ENCODE measurements at regions of chr4 and their contacts with region 1.

Region 1: DNA sequence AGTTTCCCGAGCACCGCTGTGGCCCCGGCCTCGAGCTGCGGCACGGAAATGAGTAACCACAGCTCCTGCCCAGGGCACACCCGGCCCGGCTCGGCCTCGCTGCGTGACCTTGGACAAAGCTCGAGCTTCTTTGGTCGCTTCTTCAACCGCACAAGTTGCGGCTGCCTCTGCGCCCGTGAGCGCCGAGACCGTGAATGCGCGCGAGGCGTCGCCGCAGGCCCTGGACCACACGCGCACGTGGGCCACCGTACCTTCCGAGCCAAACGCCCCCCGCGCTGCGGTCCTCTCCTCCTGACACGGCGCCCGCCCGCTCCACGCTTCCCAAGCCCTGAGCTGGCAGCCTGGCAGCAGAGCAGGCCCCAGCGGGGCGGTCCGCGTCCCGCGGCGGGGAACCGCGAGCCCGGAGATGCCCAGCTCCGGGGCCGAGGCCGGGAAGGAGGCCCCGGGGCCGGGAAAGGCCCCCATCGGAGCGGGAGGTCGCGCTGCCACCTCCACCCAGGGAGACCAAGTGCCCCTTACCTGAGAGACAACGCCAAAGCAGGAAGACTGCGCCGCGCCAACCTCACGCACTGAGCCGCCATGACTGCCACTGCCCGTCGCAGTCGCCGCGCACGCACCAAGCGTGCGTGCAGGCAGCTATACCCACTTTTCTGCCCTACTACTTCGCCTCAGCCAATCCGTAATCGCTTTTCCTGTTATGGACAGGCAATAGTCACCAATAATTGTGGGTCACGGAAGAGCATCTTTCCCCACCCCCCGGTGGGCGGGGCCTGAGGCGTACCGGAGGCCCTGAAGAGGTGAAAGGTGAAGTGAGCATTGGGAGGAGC is at the start of gene GRPEL1:
- DNase-seq: peak; percentile 99 to 100 (median 100)
- H3K4me3 ChIP-seq: peak within 1 kb of the TSS; percentile 36 to 88 (median 71)
- H3K27ac ChIP-seq: peak within 1 kb of the TSS; percentile 93 to 98 (median 95)
- H3K4me1 ChIP-seq: peaks cover 26 to 39% of the 10 kb centered on the region in 2 donors
- H3K27me3 ChIP-seq: no peaks in the 10 kb centered on the region
- CTCF ChIP-seq: peak in 1 of 6 experiments; percentile 17
- POLR2A ChIP-seq: peak; percentile 99
- total RNA-seq, gene GRPEL1: 43.7 to 249 (median 83.1) TPM

Region 2: DNA sequence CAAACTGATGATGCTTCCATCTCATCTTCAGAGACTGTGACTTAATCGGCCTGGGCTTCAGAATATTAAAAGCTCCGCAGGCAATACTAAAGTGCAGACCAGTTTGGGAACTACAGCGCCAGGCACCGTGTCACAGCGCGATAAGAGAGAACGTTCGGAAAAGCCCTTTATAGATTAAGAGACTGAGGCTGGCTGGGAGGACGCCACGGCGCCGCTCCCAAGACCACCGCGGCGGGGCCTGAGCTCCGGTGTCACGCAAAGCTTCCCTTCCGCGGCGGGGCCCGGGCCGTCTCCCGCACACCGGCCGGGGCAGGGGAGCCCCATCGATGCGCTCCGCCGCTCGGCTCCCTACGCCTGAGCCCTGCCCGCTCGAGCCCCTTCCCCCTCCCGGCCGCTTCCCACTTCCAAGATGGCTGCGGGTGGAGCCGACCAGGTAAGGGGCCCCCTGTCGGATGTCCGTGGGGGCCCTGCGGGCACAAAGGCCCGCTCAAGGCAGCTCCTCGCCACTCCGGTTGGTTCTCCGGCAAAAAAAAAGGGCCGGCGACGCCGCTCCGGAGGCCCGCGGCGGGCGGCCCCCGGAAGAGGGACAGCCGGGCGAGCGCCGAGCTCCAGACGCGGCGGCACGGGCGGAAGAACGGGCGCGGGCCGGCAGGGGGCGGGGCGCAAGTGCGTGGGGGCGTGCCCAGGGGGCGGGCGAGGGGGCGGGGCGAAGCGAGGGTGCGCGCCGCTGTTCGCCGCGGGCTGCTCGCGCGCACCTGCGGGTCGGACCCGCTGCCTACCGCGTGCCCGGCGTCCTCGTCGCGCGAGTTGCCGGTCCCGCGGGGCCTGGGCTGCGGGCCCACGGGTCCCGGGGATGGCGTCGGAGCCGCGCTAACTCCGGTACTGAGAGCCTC is 158.3 kb before region 1 on chr4 and contains the start of gene TBC1D14:
- intact Hi-C with region 1: loop called (anchors 10 kb)
- DNase-seq: peak; percentile 86 to 92 (median 90)
- H3K4me3 ChIP-seq: peak within 1 kb of the TSS; percentile 63 to 93 (median 78)
- H3K27ac ChIP-seq: peak within 1 kb of the TSS; percentile 87 to 100 (median 98)
- H3K4me1 ChIP-seq: peaks cover 32 to 55% of the 10 kb centered on the region in 2 donors
- H3K27me3 ChIP-seq: no peaks in the 10 kb centered on the region
- CTCF ChIP-seq: peak in 3 of 6 experiments; percentile 18 to 27 (median 25)
- POLR2A ChIP-seq: peak; percentile 54 to 71
- total RNA-seq, gene TBC1D14: 74.9 to 110 (median 84.3) TPM

Region 3: DNA sequence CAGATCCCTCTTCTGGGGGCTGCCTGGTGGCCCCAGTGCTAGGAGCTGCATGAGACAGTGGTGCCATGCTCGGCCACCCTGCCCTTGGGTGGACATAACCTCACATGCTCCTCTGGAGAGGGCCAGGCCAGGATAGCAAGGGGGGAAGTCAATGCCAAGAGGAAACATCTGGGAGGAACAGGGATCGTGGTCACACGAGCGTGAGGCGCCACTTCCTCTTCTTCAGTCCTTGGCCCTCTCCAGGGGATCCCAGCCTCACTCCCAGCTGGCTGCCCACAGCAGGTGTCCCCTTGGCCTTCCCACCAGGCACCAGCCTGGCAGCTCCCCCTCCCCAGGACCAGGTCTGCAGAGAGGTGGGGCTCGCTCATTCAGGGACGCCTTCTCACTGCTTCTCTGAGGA is 129.4 kb before region 1 on chr4:
- intact Hi-C with region 1: no loop called
- DNase-seq: peak in 5 of 7 donors; percentile 42 to 71 (median 64)
- H3K4me3 ChIP-seq: no peak overlapping the region
- H3K27ac ChIP-seq: peak overlapping the region in 3 of 5 donors; percentile 56 to 89 (median 74)
- H3K4me1 ChIP-seq: peaks cover 23 to 56% of the 10 kb centered on the region in 2 donors
- H3K27me3 ChIP-seq: no peaks in the 10 kb centered on the region
- CTCF ChIP-seq: no peak
- POLR2A ChIP-seq: no peak

Region 4: DNA sequence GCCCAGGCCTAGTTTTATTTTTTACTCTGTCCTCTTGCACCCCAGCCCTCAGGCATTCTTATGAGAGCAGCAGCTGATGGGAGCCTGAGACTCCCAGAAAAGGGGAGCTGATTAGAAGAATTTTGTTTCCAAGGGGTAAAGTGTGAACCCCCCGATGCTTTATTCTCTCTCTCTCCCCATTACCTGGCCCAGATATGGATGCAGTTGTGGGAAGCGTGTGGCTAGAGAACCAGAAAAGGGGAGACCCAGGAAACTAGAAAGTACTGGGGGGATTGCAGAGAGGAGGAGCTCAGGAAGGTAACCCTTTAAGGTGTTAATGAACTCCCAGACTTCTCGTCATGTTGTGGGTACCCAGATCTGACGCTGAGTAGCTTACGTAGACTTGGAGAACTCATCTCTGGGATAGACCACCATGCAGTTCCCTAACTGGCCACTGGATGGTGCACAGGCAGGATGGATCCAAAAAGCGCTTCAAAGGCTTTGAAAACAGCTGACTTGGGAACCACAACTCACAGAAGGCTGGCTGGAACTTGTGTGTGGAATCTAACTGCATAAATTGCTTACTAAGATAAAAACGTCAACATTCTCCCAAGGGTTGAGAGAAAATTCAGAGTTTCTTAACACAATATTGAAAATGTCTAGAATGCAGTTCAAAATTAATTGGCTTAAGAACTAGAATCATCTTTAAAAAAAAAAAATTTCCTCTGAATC is 93.4 kb before region 1 on chr4:
- intact Hi-C with region 1: loop called (anchors 5 to 10 kb)
- DNase-seq: peak; percentile 83 to 95 (median 86)
- H3K4me3 ChIP-seq: no peak overlapping the region
- H3K27ac ChIP-seq: no peak overlapping the region
- H3K4me1 ChIP-seq: peaks cover 0 to 14% of the 10 kb centered on the region in 2 donors
- H3K27me3 ChIP-seq: no peaks in the 10 kb centered on the region
- CTCF ChIP-seq: peak; percentile 97 to 98 (median 98)
- POLR2A ChIP-seq: no peak

Region 5: DNA sequence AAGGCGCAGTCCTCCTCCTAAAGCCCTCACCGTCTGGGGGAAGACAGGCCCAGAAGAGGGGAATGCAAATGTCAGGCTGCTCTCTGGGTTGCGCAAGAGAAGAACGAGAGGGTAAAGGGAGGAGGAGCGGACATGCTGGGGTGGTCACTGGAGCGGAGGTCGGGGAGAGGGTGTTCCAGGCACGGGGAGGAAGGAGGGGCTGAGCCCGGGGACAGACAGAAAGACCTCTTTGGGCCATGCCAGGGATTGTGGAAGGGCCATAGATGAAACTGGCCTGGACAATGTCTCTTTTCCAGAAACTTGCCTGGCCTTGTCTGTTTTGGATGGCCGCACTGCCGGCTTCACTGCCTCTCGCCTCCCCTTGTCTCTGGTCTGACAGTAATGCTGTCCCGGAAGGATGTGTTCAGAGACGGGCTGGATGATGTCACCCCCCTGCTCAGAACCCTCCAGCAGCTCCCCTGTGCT is 245.7 kb after region 1 on chr4:
- intact Hi-C with region 1: no loop called
- DNase-seq: peak in 3 of 7 donors; percentile 19 to 57 (median 35)
- H3K4me3 ChIP-seq: no peak overlapping the region
- H3K27ac ChIP-seq: peak overlapping the region in 2 of 5 donors; percentile 44 to 74
- H3K4me1 ChIP-seq: no peaks in the 10 kb centered on the region
- H3K27me3 ChIP-seq: no peaks in the 10 kb centered on the region
- CTCF ChIP-seq: no peak
- POLR2A ChIP-seq: no peak